Calu3 (cell line): ENCODE measurements at regions of chr6 and their contacts with region 1.

Region 1: GRCh38 chr6:157184202-157185020 is 138.9 kb downstream of the TMEM242 start:
- DNase-seq: peak; percentile 76
- H3K4me3 Mint-ChIP-seq: no peak overlapping the region
- H3K27ac Mint-ChIP-seq: peak overlapping the region; percentile 19
- H3K4me1 Mint-ChIP-seq: peaks cover 30% of the 10 kb centered on the region
- H3K27me3 Mint-ChIP-seq: no peaks in the 10 kb centered on the region
- CTCF ChIP-seq: peak; percentile 77

Region 2: GRCh38 chr6:157034436-157035230 is 149.8 kb before region 1 on chr6:
- CTCF ChIA-PET with region 1: no interaction called
- intact Hi-C with region 1: loop called (anchors 5 kb)
- DNase-seq: no peak
- H3K4me3 Mint-ChIP-seq: no peak overlapping the region
- H3K27ac Mint-ChIP-seq: no peak overlapping the region
- H3K4me1 Mint-ChIP-seq: no peaks in the 10 kb centered on the region
- H3K27me3 Mint-ChIP-seq: no peaks in the 10 kb centered on the region
- CTCF ChIP-seq: no peak

Region 3: GRCh38 chr6:157099912-157100593 is 84.4 kb before region 1 on chr6:
- CTCF ChIA-PET with region 1: no interaction called
- intact Hi-C with region 1: no loop called
- DNase-seq: no peak
- H3K4me3 Mint-ChIP-seq: no peak overlapping the region
- H3K27ac Mint-ChIP-seq: no peak overlapping the region
- H3K4me1 Mint-ChIP-seq: peaks cover 9% of the 10 kb centered on the region
- H3K27me3 Mint-ChIP-seq: no peaks in the 10 kb centered on the region
- CTCF ChIP-seq: no peak

Region 4: GRCh38 chr6:157123234-157123633 is 61.2 kb before region 1 on chr6:
- CTCF ChIA-PET with region 1: no interaction called
- intact Hi-C with region 1: no loop called
- DNase-seq: no peak
- H3K4me3 Mint-ChIP-seq: no peak overlapping the region
- H3K27ac Mint-ChIP-seq: no peak overlapping the region
- H3K4me1 Mint-ChIP-seq: no peaks in the 10 kb centered on the region
- H3K27me3 Mint-ChIP-seq: no peaks in the 10 kb centered on the region
- CTCF ChIP-seq: no peak